IMR-90 (cell line): ENCODE measurements at regions of chr18 and their contacts with region 1.

Region 1: DNA sequence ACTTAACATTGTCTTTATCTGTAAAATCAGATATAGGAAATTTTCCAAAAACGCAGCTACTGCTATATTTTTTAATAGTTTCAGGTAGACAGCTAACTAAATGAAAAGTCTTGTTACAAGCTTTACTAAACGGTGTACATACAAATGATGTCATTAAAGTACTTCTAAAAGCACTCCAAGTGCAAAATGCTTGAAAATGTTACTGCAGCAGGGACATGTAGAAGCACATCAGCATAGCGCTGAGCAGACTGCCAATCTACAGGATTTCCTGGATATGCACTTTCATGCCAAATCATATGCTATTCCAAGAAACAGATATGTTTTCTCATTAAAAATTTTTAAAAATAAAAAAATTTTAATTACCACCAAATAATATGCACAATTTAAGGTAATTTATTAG is 61.7 kb downstream of the SMAD2 start:
- DNase-seq: no peak
- ATAC-seq: no peak
- H3K4me3 ChIP-seq: no peak overlapping the region
- H3K27ac ChIP-seq: no peak overlapping the region
- H3K4me1 ChIP-seq: no peaks in the 10 kb centered on the region
- H3K27me3 ChIP-seq: no peaks in the 10 kb centered on the region
- CTCF ChIP-seq: no peak
- POLR2A ChIP-seq: no peak
- RAD21 ChIP-seq: no peak

Region 2: DNA sequence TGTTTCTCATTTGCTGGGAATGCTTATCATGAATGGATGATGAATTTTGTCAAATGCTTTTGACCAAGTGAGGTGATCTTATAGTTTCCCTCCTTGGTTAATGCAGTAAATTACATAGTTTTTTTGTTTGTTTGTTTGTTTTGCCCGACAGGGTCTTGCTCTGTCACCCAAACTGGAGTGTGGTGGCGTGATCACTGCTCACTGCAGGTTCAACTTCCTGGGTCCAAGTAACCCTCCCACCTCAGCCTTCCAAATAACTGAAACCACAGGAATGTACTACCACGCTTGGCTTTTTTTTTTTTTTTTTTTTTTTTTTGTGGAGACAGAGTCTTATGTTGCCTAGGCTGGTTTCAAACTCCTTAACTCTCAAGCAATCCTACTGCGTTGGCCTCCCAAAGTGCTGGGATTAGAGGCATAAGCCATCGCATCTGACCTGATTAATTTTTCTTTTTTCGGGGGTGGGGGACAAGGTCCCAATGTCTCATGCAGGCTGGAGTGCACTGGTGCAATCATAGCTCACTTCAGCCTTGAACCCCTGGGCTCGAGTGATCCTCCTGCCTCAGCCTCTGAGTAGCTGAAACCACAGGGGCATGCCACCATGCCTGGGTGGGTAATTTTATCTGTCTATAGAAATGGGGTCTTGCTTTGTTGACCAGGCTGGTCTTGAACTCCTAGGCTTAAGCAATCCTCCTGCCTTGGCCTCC is 13.2 kb after region 1 on chr18:
- CTCF ChIA-PET with region 1: no interaction called
- POLR2A ChIA-PET with region 1: no interaction called
- dilution Hi-C with region 1: no loop called
- in situ Hi-C with region 1: no loop called
- intact Hi-C with region 1: no loop called
- DNase-seq: peak; percentile 61
- ATAC-seq: peak; percentile 77
- H3K4me3 ChIP-seq: no peak overlapping the region
- H3K27ac ChIP-seq: no peak overlapping the region
- H3K4me1 ChIP-seq: peaks cover 10% of the 10 kb centered on the region
- H3K27me3 ChIP-seq: no peaks in the 10 kb centered on the region
- CTCF ChIP-seq: no peak
- POLR2A ChIP-seq: no peak
- RAD21 ChIP-seq: no peak

Region 3: DNA sequence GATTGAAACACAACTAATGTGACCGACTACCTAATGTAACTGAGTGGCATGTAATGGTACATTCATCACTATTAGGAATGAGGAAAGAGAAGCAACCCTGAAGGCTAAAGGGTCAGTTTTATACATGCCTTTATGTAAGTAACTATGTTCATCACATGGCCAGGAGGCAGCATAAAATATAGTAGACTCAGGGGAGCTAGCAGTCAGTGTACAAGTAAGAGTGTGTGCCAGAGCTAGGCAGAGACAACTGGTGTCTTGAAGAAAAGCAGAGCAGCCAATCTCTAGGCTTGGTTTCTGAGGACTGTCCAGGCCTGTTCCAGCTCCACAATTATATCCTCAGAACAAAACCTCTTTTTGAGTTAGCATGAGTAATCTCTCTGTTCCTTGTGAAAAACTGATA is 43.6 kb after region 1 on chr18:
- CTCF ChIA-PET with region 1: interaction called, 5 read pairs
- POLR2A ChIA-PET with region 1: no interaction called
- dilution Hi-C with region 1: no loop called
- in situ Hi-C with region 1: no loop called
- intact Hi-C with region 1: loop called (anchors 5 kb)
- DNase-seq: no peak
- ATAC-seq: peak; percentile 59; the same call in 1 of the 2 replicates
- H3K4me3 ChIP-seq: no peak overlapping the region
- H3K27ac ChIP-seq: no peak overlapping the region
- H3K4me1 ChIP-seq: no peaks in the 10 kb centered on the region
- H3K27me3 ChIP-seq: no peaks in the 10 kb centered on the region
- CTCF ChIP-seq: no peak
- POLR2A ChIP-seq: no peak
- RAD21 ChIP-seq: no peak